ENCODE measurements at regions of chr1 and their contacts with region 1.

Region 1: DNA sequence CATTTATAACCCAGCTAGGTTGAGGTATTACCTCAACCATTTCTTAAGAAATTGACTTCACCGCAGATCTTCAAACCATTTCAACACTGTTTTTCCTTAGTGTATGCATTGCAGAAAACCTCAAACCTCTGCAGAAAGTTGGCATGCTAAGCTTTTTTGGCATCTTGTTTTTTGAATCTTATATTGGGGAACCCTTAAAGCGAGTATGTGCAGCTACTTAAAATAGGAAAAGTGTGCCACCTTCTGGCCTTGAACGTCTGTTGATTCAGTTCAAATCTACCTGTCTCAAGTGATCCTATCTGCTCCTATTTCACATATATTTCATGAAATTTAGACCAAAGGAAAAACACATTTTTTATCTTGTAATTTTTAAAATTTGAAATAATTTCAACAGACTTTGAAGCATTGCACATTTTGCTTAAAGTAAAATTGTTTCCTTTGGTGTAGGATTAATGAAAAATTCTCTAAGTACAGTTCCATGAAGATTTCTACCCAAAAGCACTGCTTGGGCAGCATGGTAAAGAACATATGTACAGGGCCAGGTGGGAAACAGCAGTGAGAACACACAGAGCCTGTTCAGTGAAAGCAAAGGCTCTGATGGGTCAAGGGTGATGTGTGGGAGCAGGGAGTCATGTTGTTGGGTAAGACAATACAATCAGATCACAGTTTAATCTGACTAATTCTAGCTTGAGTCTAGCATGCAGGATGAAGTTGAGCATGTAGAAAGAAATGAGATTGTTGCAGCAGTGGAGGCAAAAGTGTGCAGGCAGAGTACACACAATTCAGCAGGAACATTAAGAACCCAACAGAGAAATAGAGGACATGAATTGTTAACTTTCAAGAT is 17.2 kb downstream of the HENMT1 start:
- DNase-seq: no peak
- ATAC-seq: peak in 2 of 4 donors; percentile 65 to 77
- H3K4me3 ChIP-seq: no peak overlapping the region
- H3K27ac ChIP-seq: no peak overlapping the region
- H3K4me1 ChIP-seq: no peaks in the 10 kb centered on the region
- H3K27me3 ChIP-seq: no peaks in the 10 kb centered on the region
- CTCF ChIP-seq: peak; percentile 66

Region 2: GRCh38 chr1:108512239-108512981 is 131.3 kb before region 1 on chr1:
- intact Hi-C with region 1: loop called (anchors 2 to 5 kb)
- DNase-seq: no peak
- ATAC-seq: no peak
- H3K4me3 ChIP-seq: no peak overlapping the region
- H3K27ac ChIP-seq: no peak overlapping the region
- H3K4me1 ChIP-seq: no peaks in the 10 kb centered on the region
- H3K27me3 ChIP-seq: no peaks in the 10 kb centered on the region
- CTCF ChIP-seq: peak; percentile 75

Region 3: DNA sequence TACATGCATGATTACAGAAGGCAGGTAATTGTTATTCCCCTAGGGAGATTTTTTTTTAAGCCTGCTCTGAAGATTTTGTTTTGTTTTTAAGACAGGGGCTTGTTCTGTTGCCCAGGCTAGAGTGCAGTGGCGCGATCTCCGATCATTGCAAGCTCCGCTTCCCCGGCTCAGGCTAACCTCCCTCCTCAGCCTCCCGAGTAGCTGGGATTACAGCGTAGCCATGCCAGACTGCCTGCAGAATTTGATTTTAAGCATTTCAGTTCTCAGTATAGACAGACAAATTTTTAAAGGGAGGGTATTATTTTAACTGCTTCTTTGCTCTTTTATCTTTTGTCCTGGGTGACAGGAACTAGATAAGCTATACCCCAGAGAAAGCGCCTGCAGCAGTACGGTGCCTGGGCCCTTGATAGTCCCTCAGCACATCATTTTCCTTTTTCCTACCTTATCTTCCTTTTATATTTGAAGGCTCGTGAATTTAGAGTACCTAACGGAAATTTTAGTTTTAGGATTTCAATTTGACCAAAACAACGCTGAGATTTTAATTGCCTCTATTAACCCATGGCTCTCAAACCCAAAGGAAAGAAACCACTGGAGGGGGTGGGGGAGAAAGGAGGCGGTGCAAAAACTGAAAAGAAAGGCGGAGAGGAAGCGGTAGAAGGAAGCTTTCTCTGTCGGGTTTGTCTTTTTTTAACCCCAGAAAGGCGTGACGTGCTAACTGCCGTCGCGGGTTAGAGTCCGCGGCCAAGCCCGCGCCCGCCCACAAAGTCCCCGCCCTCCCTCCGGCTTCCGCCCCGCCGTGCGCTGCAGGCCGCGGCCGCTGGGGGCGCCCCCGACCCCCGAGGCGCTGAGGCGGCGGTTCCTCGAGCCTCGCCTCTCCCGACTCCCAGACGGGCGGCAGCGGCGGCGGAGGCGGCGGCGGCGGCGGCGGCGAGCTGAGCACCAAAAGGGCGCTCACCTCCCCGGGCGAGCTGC is 84.2 kb before region 1 on chr1 and contains the start of gene EEIG2:
- intact Hi-C with region 1: loop called in 1 of 2 experiments (anchors 10 kb)
- DNase-seq: peak; percentile 84 to 89
- ATAC-seq: peak; percentile 90 to 98 (median 96)
- H3K4me3 ChIP-seq: peak within 1 kb of the TSS; percentile 74
- H3K27ac ChIP-seq: peak within 1 kb of the TSS; percentile 21
- H3K4me1 ChIP-seq: no peaks in the 10 kb centered on the region
- H3K27me3 ChIP-seq: no peaks in the 10 kb centered on the region
- CTCF ChIP-seq: peak; percentile 74
- total RNA-seq, gene EEIG2: 0.90 to 2.1 (median 1.3) TPM

Measured in psoas muscle (tissue), 8 donors.